ENCODE measurements at regions of chr16 and their contacts with region 1.

Region 1: DNA sequence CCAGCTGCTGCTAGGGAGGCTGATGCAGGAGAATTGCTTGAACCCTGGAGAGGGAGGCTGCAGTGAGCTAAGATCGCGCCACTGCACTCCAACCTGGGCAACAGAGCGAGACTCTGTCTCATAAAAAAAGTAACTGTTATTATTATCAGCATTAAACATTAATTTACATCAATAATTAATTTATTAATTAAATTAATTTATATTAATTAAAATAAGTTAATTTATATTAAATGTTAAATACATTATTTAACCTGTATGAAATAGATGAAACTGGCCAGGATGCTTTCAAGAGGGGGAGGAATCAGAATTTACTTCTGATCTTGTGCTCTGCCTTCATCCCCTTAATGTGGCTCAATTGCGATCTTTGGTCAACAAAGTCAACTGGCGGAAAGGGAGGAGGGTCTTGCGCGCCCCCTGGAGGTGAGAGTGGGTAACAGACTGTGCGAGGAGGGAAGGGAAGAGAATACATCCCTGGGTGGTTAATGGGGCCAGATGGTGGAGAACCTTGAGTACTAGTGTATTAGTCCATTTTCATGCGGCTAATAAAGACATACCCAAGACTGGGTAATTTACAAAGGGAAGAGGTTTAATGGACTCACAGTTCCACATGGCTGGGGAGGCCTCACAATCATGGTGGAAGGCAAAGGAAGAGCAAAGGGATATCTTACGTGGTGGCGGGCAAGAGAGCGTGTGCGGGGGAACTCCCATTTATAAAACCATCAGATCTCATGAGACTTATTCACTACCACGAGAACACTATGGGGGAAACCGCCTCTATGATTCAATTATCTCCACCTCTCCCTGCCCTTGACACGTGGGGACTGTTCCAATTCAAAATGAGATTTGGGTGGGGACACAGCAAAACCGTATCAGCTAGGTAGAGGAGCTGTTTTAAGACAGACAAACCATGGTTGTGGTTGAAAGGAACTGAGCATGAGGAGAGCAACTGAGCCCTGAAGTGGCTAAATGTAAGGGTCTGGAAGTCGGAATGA is 15.7 kb upstream of the CPPED1 start:
- DNase-seq: peak; percentile 56 to 77
- H3K4me3 ChIP-seq: no peak overlapping the region
- H3K27ac ChIP-seq: no peak overlapping the region
- H3K4me1 ChIP-seq: peaks cover 0 to 6% (median 2%) of the 10 kb centered on the region in 4 donors
- H3K27me3 ChIP-seq: no peaks in the 10 kb centered on the region
- CTCF ChIP-seq: peak; percentile 72 to 75

Region 2: DNA sequence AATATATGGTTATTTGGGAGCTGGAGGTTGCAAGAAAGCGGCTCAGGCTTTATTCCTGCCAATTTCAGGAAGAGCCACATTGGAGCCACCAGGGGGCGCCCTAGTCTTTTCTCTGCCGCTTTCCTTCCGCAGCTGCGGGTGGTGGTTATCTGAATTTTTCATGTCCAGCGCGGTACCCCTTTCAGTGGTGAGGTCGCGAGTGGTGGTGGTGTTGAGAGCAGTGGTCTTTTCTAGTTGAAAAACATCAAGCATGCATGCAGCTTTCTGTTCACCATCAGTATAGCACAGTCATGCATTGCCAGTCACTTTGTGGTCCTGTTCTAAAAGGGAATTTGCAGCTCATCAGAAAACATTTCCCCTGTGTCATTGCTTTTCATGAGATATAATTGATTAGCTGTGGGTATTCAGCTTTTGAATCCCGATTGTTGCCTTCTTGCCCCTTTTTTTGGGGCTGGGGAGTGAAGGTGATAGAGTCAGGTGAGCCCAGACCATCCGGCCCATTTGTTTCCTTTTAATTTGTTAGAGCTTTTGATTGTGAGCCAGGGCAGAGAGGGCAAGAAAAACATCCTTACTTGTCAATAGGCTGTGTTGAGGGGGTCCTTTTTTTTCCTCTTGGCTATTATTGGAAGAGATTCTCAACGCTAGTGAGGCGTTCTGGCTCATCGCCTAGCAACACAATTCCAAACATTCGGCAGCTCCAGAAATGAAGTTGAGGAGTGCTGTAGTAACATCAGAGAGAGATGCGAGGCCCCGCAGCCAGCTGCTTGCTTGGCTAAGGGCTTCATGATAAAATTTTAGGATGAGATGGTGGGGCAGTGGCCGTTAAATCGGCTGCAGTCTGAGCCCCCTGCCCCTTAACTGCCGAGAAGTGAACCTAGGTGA is 723.9 kb before region 1 on chr16:
- intact Hi-C with region 1: loop called (anchors 10 kb)
- DNase-seq: peak; percentile 35 to 75
- H3K4me3 ChIP-seq: peak overlapping the region; percentile 9 to 25
- H3K27ac ChIP-seq: no peak overlapping the region
- H3K4me1 ChIP-seq: peaks cover 0 to 20% (median 10%) of the 10 kb centered on the region in 4 donors
- H3K27me3 ChIP-seq: no peaks in the 10 kb centered on the region
- CTCF ChIP-seq: peak; percentile 84 to 87

Region 3: DNA sequence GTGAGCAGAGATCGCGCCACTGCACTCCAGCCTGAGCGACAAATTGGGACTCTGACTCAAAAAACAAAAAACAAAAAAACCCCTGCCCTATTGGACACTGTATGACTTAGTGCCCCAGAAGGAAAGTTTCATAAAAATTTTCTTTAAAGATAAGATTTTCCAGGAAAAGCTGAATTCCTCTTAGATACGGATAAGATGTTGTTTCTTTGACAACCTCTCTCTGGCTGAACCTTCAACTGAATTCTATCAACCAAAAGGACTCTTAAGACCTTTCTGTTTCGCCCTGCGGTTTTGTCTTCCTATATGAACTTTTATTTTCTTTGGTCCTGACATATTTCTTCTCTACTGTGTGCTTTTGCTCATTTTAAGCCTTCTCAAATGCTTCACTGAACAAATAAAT is 51.5 kb before region 1 on chr16:
- intact Hi-C with region 1: loop called (anchors 10 kb)
- DNase-seq: no peak
- H3K4me3 ChIP-seq: no peak overlapping the region
- H3K27ac ChIP-seq: no peak overlapping the region
- H3K4me1 ChIP-seq: no peaks in the 10 kb centered on the region
- H3K27me3 ChIP-seq: no peaks in the 10 kb centered on the region
- CTCF ChIP-seq: no peak

Measured in tibial artery (tissue), 4 donors.